WTC11 (cell line): ENCODE measurements at regions of chr3 and their contacts with region 1.

Region 1: GRCh38 chr3:111577794-111578685 is 17.1 kb downstream of the ZBED2 start:
- DNase-seq: no peak
- ATAC-seq: peak; percentile 95
- H3K4me3 Mint-ChIP-seq: no peak overlapping the region
- H3K27ac Mint-ChIP-seq: no peak overlapping the region
- H3K4me1 Mint-ChIP-seq: no peaks in the 10 kb centered on the region
- H3K27me3 Mint-ChIP-seq: no peaks in the 10 kb centered on the region; the same call in 1 of the 2 replicates
- CTCF ChIP-seq: no peak

Region 2: GRCh38 chr3:111539351-111540331 is 38.4 kb before region 1 on chr3:
- CTCF ChIA-PET with region 1: no interaction called
- POLR2A ChIA-PET with region 1: no interaction called
- DNase-seq: peak; percentile 79
- ATAC-seq: peak; percentile 99
- H3K4me3 Mint-ChIP-seq: no peak overlapping the region
- H3K27ac Mint-ChIP-seq: no peak overlapping the region
- H3K4me1 Mint-ChIP-seq: peaks cover 4% of the 10 kb centered on the region
- H3K27me3 Mint-ChIP-seq: no peaks in the 10 kb centered on the region
- CTCF ChIP-seq: peak; percentile 59

Region 3: DNA sequence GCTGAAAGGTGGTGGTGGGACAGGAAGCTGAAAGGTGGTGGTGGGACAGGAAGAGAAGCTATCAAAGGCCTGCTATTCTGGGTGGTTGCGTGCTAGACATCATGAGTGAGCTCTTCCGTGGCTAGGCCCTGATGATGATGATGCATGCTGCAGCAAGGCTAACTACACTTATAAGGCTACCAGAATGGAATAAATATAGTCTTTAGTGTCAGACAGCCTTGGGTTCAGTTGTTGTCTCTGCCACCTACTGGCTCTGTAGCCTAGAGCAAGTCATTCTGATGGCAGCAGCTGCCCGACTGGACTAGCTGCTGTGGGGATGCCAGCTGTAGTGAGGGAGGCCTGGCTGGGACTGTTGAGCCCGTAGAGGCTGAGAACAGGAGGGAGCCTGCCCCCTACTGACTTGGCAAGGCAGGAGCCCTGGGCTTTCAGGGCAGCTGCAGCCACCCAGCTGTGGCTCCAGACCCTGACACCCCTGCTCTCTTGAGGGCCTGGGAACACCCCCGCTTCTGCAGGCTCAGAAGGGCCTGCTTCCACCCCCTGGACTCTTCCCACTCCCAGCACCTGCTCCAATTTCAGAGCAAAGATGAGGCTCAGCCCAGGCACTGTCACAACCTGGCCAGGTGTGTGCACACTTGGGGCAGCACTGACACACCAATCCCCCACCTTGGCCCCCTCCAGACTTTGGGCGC is 38.5 kb after region 1 on chr3:
- CTCF ChIA-PET with region 1: interaction called, 11 read pairs
- POLR2A ChIA-PET with region 1: no interaction called
- DNase-seq: no peak
- ATAC-seq: 0 out of 2 replicates have a peak, but pooled peaks have one; percentile 26
- H3K4me3 Mint-ChIP-seq: no peak overlapping the region
- H3K27ac Mint-ChIP-seq: no peak overlapping the region
- H3K4me1 Mint-ChIP-seq: no peaks in the 10 kb centered on the region
- H3K27me3 Mint-ChIP-seq: no peaks in the 10 kb centered on the region; the same call in 1 of the 2 replicates
- CTCF ChIP-seq: no peak

Region 4: DNA sequence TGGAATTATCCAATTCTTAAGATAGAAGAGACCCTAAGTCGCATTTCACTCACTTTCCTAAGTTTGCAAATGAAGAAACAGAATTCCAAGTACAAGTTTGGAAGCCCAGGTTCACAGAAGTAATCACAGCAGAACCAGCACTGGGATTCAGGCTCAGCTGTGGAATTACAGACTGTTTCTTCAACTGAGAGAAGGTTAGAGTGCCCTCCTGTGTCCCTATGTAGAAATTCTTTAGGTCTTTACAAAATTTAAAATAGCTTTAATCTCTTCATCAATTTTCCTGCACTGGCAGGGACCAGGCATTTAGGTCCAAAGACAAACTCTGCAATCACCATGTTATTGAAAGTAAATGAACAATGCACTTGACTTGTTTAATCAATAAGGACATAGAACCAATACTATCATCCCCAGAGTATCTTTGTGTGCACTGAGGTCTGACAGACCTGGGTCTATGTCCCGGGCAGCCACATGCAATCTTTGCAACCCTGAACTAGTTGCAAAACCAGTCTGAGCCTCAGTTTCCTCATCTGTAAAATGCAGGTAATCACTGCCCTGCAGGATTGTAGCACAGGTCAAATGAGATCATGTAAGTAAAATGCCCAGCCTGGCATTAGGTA is 113.4 kb after region 1 on chr3:
- CTCF ChIA-PET with region 1: interaction called, 19 read pairs
- POLR2A ChIA-PET with region 1: no interaction called
- DNase-seq: no peak
- ATAC-seq: peak; percentile 82
- H3K4me3 Mint-ChIP-seq: no peak overlapping the region
- H3K27ac Mint-ChIP-seq: no peak overlapping the region
- H3K4me1 Mint-ChIP-seq: peaks cover 10% of the 10 kb centered on the region; the same call in 1 of the 2 replicates
- H3K27me3 Mint-ChIP-seq: no peaks in the 10 kb centered on the region
- CTCF ChIP-seq: no peak